ENCODE measurements at regions of chr3 and their contacts with region 1.

Region 1: DNA sequence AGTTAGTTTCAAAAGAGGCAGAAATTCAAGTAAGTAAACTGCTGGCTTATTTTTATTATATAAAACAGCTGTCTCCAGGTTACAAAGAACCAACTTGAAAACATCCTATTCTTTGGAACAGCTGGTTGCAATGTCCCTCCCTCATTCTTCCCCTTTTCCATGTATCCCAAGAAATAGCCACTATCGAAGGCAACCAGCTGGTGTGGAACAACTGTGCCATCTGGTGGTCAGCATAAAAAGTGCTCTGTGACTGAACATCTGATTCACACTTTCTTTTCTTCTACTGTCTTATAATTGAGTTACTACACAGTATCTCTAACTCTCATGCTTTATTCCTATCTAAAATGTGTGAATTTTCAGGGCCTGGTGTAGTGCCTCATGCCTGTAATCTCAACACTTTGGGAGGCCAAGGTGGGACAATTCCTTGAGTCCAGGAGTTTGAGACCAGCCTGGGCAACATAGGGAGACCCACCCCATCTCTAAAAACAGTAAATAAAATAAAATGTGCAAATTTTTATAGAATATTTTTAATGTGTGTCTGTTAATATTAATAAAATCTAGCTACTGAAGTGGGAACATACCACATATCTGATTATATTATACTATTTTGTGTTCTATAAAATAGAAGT is 9.6 kb downstream of the OSBPL11 start:
- DNase-seq: peak; percentile 23
- H3K4me3 Mint-ChIP-seq: no peak overlapping the region
- H3K27ac Mint-ChIP-seq: no peak overlapping the region
- H3K4me1 Mint-ChIP-seq: peaks cover 10% of the 10 kb centered on the region
- H3K27me3 Mint-ChIP-seq: no peaks in the 10 kb centered on the region

Region 2: DNA sequence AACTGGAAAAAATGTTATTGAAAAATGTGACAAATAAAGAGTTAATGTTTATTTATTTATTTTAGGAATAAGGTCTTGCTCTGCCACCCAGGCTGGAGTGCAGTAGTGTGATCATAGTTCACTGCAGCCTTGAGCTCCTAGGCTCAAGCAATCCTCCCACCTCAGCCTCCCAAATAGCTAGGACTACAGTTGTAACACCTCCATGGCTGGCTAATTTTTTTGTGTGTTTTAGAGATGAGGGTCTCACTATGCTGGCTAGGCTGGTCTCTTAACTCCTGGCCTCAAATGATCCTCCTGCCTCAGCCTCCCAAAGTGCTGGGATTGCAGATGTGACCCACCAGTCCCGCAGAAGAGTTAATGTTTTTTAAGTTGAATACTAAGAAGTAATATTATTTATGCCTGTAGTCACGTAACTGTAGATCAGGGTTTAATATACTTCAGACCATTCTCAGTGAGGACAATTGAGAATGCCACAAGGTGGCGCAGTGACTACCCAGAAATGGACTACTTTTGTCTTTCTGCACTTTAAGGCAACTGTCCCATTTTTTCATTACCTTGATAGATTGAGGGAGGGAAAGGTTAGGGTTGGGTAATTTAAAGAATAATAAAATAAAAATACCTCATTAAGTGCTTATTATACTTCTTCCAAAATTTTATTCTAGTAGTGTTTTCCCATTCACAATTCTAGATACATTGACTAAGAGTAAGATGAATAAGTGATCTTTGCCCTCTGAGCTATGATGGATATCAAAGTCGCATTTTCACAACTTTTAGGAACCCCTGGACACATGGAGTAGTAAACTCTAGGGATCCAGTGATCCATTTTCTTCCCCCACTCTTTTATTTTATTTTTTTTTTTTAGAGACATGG is 657.1 kb before region 1 on chr3:
- intact Hi-C with region 1: loop called (anchors 1 kb)
- DNase-seq: peak; percentile 33
- H3K4me3 Mint-ChIP-seq: no peak overlapping the region
- H3K27ac Mint-ChIP-seq: no peak overlapping the region
- H3K4me1 Mint-ChIP-seq: no peaks in the 10 kb centered on the region
- H3K27me3 Mint-ChIP-seq: peaks cover 45% of the 10 kb centered on the region

Region 3: GRCh38 chr3:125150525-125151441 is 434.9 kb before region 1 on chr3:
- intact Hi-C with region 1: loop called (anchors 1 kb)
- DNase-seq: peak; percentile 48
- H3K4me3 Mint-ChIP-seq: no peak overlapping the region
- H3K27ac Mint-ChIP-seq: no peak overlapping the region
- H3K4me1 Mint-ChIP-seq: peaks cover 26% of the 10 kb centered on the region
- H3K27me3 Mint-ChIP-seq: peaks cover 40% of the 10 kb centered on the region

Region 4: DNA sequence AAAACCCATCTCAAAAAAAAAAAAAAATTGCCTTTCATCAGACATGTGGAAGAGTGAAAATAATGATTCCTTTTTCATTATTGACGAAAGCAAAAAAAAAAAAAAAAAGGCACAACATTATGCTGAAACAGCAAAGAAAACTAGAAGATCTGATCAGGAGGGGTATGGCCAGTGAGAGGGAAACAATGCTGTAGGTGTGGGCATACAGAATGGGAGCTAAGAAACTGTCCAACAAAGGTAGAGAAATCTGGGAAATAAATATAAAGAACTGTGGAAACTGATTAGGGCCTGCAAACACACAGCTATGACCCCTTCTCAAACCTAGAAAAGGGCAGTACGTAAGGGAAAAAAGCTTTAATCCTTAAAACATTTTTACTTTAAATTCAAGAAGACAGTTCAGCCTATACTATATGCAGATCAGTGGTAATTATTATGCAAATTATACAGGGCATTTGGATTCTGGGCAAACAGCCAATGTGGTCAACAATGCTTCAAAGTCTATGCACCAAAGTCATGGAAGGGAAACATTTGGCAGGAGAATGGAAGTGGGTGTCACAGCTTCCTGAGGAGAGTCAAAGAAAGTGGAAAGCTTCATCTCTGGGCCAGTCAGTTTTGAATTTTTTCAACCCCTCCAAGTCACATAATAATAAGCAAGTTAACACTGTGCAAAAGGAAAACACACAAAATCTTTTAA is 304.9 kb before region 1 on chr3:
- intact Hi-C with region 1: no loop called
- DNase-seq: no peak
- H3K4me3 Mint-ChIP-seq: no peak overlapping the region
- H3K27ac Mint-ChIP-seq: no peak overlapping the region
- H3K4me1 Mint-ChIP-seq: peaks cover 10% of the 10 kb centered on the region
- H3K27me3 Mint-ChIP-seq: no peaks in the 10 kb centered on the region

Region 5: DNA sequence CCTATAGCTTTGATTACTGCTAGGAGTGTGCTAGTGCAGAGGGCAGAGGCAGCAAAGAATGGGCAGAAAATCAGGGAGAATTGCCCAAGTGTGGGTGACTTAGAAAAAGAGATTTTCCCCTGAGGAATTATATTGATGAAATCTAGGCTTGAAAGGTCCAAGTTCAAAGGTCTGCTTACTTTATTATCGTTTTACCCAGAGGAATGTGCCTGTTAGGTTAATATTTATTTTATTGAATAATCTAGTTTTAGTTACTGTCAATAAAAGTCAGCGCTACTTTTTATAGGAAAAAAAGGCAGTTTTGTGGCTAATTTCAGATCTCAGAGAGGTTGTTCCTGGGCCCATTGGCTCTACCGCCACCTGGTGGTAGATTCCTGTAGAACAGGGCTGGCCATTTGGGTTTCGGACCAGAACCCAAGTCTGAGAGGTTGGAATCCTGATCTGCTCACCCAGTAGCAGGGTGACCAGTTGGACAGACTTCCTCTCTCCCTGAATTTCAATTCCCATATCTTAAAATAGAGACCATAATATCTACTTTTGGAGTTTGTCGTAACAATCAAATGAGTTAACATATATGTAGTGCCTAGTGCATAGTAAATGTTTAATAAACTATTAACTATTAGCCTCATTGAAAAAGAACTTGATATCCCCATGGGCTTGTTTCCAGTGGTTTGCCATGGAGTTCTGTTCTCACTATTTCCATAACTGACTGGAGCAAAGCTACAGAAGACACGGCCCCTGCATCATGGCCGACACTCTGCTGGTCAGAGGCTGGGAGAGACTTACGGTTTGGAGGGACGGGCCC is 147.9 kb before region 1 on chr3:
- intact Hi-C with region 1: loop called (anchors 5 kb)
- DNase-seq: peak; percentile 37
- H3K4me3 Mint-ChIP-seq: no peak overlapping the region
- H3K27ac Mint-ChIP-seq: no peak overlapping the region
- H3K4me1 Mint-ChIP-seq: no peaks in the 10 kb centered on the region
- H3K27me3 Mint-ChIP-seq: peaks cover 2% of the 10 kb centered on the region

Region 6: DNA sequence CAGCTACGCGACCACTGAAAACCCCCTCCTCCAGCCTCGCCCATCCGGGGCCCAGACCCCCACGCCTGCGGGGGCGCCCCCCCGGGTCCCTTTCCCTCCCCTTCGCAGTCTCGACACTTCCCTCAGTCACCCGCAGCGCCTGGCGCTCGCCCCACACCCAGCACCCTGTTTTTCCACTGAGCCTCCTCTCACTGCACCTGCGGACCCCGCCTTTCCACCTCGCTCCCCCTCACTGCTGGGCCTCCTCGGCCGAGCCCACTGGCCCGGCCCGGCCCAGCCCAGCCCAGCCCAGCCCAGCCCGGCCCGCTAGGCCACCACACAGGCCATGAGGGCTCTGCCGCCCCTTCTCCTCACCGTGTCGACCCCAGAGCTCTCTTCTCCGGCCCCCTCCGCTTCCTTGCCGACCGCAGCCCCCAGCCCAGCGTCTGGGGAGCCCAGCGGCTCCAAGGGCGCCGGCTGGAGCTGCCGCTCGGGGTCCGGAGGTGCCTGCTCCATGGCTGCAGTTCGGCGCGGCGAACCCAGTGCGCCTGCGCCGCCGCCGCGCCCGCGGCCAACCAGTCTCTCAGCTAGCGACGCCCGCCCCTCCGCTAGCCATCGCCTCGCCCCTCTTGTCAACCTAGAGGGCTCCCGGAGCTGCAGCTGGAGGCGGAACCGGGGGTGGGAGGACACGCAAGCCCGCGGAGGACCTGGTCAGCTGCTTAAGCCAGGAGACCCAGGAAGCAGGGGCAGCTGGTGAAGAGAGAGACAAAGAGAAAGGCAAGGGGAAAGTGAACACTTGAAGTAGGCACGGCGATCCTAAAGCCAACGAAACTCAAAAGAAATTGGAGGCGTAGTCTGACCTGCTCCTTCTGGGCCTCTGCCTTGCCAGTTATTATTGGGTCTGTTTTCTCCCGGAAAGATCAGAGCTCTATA is 65.8 kb before region 1 on chr3 and contains the start of gene SNX4:
- intact Hi-C with region 1: loop called (anchors 2 kb)
- DNase-seq: peak; percentile 85
- H3K4me3 Mint-ChIP-seq: peak within 1 kb of the TSS; percentile 98
- H3K27ac Mint-ChIP-seq: peak within 1 kb of the TSS; percentile 74
- H3K4me1 Mint-ChIP-seq: peaks cover 28% of the 10 kb centered on the region
- H3K27me3 Mint-ChIP-seq: no peaks in the 10 kb centered on the region
- total RNA-seq, gene SNX4: 40.7 and 44.4 TPM in 2 replicates

Region 7: GRCh38 chr3:125556314-125556713 is 29.4 kb before region 1 on chr3:
- intact Hi-C with region 1: no loop called
- DNase-seq: no peak
- H3K4me3 Mint-ChIP-seq: no peak overlapping the region
- H3K27ac Mint-ChIP-seq: no peak overlapping the region
- H3K4me1 Mint-ChIP-seq: peaks cover 10% of the 10 kb centered on the region
- H3K27me3 Mint-ChIP-seq: no peaks in the 10 kb centered on the region

Measured in activated T-helper 1 cell treated with anti-CD3 and anti-CD28 coated beads, Interleukin-12 subunit alpha, Interleukin-12 subunit beta, Interleukin-2, Interleukin-4 antibody, amounts not matched to agents 30 ng/mL and 10 ng/mL and 1 ng/mL, durations not matched to agents 14 hours and 24 hours and 36 hours (primary cell).